ENCODE measurements at regions of chr5 and their contacts with region 1.

Region 1: DNA sequence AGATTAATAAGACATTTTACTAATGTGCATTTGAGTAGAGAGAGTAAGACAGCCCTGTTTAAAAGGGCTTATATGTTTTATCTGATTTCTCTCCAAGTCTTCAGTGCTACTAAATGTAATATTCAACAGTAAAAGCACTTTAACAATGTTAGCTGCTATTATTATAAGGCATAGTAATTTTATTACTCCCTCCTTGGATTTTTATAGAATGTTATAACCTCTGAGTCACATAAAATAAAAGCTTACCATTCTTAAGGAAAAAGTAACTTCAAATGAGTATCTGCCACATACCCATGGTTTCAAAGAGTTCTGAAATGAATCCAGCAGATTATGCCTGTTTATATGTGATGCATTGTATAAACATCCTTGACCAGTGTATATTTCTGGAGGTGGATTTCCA is 19.0 kb downstream of the SPDL1 start:
- DNase-seq: peak; percentile 85
- ATAC-seq: peak; percentile 85
- H3K4me3 ChIP-seq: no peak overlapping the region
- H3K27ac ChIP-seq: peak overlapping the region; percentile 85
- H3K4me1 ChIP-seq: peaks cover 27% of the 10 kb centered on the region
- H3K27me3 ChIP-seq: no peaks in the 10 kb centered on the region
- CTCF ChIP-seq: no peak

Region 2: DNA sequence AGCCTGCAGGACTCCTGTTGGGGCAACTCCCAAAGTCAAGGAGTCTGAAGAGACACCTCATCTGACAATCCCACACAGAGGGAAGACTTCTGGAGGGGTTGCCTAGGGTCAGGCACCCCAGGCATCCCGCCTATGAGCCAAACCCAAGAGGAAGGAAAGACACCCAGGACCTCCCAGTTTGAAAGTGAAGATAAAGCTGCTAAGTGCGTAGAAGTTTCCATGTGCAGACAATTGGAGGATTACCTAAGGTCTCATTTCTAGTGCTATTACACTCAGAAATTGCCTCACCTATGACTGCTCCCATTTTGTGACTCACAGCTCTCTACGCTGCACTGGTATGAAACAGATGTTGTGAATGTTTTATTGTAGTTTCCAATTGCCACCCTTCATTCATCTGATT is 624.5 kb before region 1 on chr5:
- CTCF ChIA-PET with region 1: no interaction called
- POLR2A ChIA-PET with region 1: no interaction called
- intact Hi-C with region 1: no loop called
- DNase-seq: peak; percentile 62
- ATAC-seq: peak; percentile 64
- H3K4me3 ChIP-seq: no peak overlapping the region
- H3K27ac ChIP-seq: no peak overlapping the region
- H3K4me1 ChIP-seq: 0 out of 2 replicates have a peak, but pooled peaks cover 7% of the 10 kb centered on the region
- H3K27me3 ChIP-seq: no peaks in the 10 kb centered on the region
- CTCF ChIP-seq: no peak

Region 3: GRCh38 chr5:169583424-169584204 is 18.9 kb before region 1 on chr5 and contains the start of gene SPDL1:
- CTCF ChIA-PET with region 1: no interaction called
- POLR2A ChIA-PET with region 1: interaction called, 3 read pairs
- intact Hi-C with region 1: loop called (anchors 2 kb)
- DNase-seq: peak; percentile 97
- ATAC-seq: peak; percentile 92
- H3K4me3 ChIP-seq: peak within 1 kb of the TSS; percentile 88
- H3K27ac ChIP-seq: peak within 1 kb of the TSS; percentile 66
- H3K4me1 ChIP-seq: peaks cover 17% of the 10 kb centered on the region
- H3K27me3 ChIP-seq: no peaks in the 10 kb centered on the region
- CTCF ChIP-seq: no peak
- total RNA-seq, gene SPDL1: 29.9 and 38.8 TPM in 2 replicates

Region 4: GRCh38 chr5:169591636-169592035 is 10.9 kb before region 1 on chr5:
- CTCF ChIA-PET with region 1: no interaction called
- POLR2A ChIA-PET with region 1: interaction called, 3 read pairs
- intact Hi-C with region 1: loop called (anchors 1 kb)
- DNase-seq: peak; percentile 60
- ATAC-seq: peak; percentile 48
- H3K4me3 ChIP-seq: no peak overlapping the region
- H3K27ac ChIP-seq: peak overlapping the region; percentile 93
- H3K4me1 ChIP-seq: peaks cover 47% of the 10 kb centered on the region
- H3K27me3 ChIP-seq: no peaks in the 10 kb centered on the region
- CTCF ChIP-seq: no peak

Region 5: DNA sequence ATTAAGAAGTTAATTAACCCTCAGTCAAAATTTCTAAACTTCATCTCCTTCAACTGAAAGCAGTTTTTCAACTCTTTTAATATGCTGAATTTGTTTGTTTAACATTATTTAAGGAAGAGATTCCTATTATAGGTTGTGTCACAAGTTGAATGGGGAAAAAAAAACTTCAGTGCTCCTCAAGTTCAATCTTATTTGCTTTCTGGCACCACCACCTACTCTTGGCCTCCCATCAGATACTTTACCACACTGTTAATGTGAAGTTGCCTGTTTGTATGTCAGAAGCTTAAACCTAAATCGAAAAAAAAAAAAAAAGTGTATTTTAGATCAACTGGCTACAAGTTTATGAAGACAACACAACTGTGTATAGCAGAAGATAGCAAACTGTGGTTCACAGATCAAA is 30.4 kb after region 1 on chr5:
- CTCF ChIA-PET with region 1: no interaction called
- POLR2A ChIA-PET with region 1: interaction called, 4 read pairs
- intact Hi-C with region 1: loop called (anchors 1 kb)
- DNase-seq: peak; percentile 7
- ATAC-seq: peak; percentile 48
- H3K4me3 ChIP-seq: no peak overlapping the region
- H3K27ac ChIP-seq: peak overlapping the region; percentile 38
- H3K4me1 ChIP-seq: peaks cover 35% of the 10 kb centered on the region
- H3K27me3 ChIP-seq: no peaks in the 10 kb centered on the region
- CTCF ChIP-seq: no peak

Region 6: GRCh38 chr5:169668732-169669131 is 66.2 kb after region 1 on chr5:
- CTCF ChIA-PET with region 1: no interaction called
- POLR2A ChIA-PET with region 1: no interaction called
- intact Hi-C with region 1: loop called (anchors 2 kb)
- DNase-seq: peak; percentile 33
- ATAC-seq: peak; percentile 77
- H3K4me3 ChIP-seq: peak overlapping the region; percentile 7; the same call in 1 of the 2 replicates
- H3K27ac ChIP-seq: peak overlapping the region; percentile 45
- H3K4me1 ChIP-seq: peaks cover 15% of the 10 kb centered on the region
- H3K27me3 ChIP-seq: no peaks in the 10 kb centered on the region
- CTCF ChIP-seq: peak; percentile 28; the same call in 1 of the 2 replicates

Region 7: DNA sequence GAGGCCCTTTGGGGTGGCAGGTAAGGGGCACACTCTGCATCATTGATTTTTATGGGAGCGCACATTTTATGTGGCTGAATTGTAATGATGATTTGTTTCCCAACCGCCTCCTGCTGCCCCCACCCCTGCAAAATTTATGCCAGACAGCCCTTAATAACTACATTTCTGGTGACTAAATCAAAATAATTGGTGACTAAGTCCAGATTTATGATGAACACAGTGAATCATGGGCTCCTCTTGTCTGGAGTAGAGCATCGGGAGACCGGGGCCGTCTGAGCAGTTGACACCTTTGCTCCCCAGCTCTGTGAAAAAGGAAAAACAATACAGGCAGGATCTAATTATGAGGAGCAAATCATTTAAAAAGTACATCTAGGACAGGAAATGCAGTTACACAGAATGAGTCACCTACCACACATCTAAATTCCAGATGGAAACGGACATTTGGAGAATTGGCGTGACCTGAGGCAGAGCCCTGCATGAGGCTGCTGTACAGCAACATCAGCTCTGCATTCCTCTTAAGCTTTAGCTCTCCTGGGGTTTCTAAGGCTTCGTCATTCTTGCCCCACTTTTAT is 93.5 kb after region 1 on chr5:
- CTCF ChIA-PET with region 1: interaction called, 3 read pairs
- POLR2A ChIA-PET with region 1: no interaction called
- intact Hi-C with region 1: loop called (anchors 1 kb)
- DNase-seq: peak; percentile 96
- ATAC-seq: peak; percentile 87
- H3K4me3 ChIP-seq: peak overlapping the region; percentile 32; the same call in 1 of the 2 replicates
- H3K27ac ChIP-seq: peak overlapping the region; percentile 82
- H3K4me1 ChIP-seq: peaks cover 28% of the 10 kb centered on the region
- H3K27me3 ChIP-seq: no peaks in the 10 kb centered on the region
- CTCF ChIP-seq: no peak

Region 8: DNA sequence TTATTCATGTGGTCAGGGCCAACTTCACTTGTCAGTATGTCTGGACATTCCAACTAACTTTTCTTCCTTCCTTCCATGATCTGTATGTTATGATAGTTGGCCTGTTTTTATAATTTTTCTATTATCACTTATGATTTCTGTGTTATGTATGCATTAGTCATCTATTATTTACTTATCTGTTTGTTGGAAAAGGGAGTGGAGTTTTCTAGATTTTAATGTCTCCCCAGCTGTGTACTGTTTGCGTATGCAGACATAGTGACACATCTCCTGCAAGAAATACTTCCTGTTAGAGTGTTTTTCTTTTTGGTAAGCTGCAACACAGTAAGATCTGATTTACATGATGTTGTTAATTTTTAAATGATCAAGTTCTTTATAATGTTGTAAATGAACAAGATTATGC is 386.4 kb after region 1 on chr5:
- CTCF ChIA-PET with region 1: no interaction called
- POLR2A ChIA-PET with region 1: no interaction called
- intact Hi-C with region 1: loop called (anchors 1 kb)
- DNase-seq: peak; percentile 69
- ATAC-seq: peak; percentile 97
- H3K4me3 ChIP-seq: no peak overlapping the region
- H3K27ac ChIP-seq: peak overlapping the region; percentile 64
- H3K4me1 ChIP-seq: peaks cover 11% of the 10 kb centered on the region
- H3K27me3 ChIP-seq: no peaks in the 10 kb centered on the region
- CTCF ChIP-seq: no peak